ENCODE measurements at regions of chrX and their contacts with region 1.

Region 1: GRCh38 chrX:40735325-40736169 is at the start of gene MED14:
- DNase-seq: peak; percentile 93
- H3K4me3 ChIP-seq: peak within 1 kb of the TSS; percentile 51 to 88 (median 58)
- H3K27ac ChIP-seq: peak within 1 kb of the TSS; percentile 87
- H3K4me1 ChIP-seq: peaks cover 3% of the 10 kb centered on the region
- H3K27me3 ChIP-seq: no peaks in the 10 kb centered on the region
- CTCF ChIP-seq: peak; percentile 28 to 75
- total RNA-seq, gene MED14: 25.7 to 58.7 TPM

Region 2: GRCh38 chrX:40552768-40553167 is 182.8 kb before region 1 on chrX:
- CTCF ChIA-PET with region 1: no interaction called
- dilution Hi-C with region 1: no loop called
- in situ Hi-C with region 1: no loop called
- intact Hi-C with region 1: no loop called
- DNase-seq: no peak
- H3K4me3 ChIP-seq: no peak overlapping the region
- H3K27ac ChIP-seq: no peak overlapping the region
- H3K4me1 ChIP-seq: no peaks in the 10 kb centered on the region
- H3K27me3 ChIP-seq: peaks cover 2% of the 10 kb centered on the region
- CTCF ChIP-seq: peak in 1 of 2 donors; percentile 11

Region 3: GRCh38 chrX:40647307-40648197 is 88.0 kb before region 1 on chrX and contains the start of gene CXorf38:
- CTCF ChIA-PET with region 1: no interaction called
- dilution Hi-C with region 1: no loop called
- in situ Hi-C with region 1: no loop called
- intact Hi-C with region 1: loop called (anchors 5 kb)
- DNase-seq: peak; percentile 88
- H3K4me3 ChIP-seq: peak within 1 kb of the TSS; percentile 52 to 89 (median 77)
- H3K27ac ChIP-seq: peak within 1 kb of the TSS; percentile 62
- H3K4me1 ChIP-seq: peaks cover 17% of the 10 kb centered on the region
- H3K27me3 ChIP-seq: no peaks in the 10 kb centered on the region
- CTCF ChIP-seq: no peak
- total RNA-seq, gene CXorf38: 18.0 to 19.8 TPM

Region 4: GRCh38 chrX:40778861-40779575 is 43.5 kb after region 1 on chrX:
- CTCF ChIA-PET with region 1: no interaction called
- dilution Hi-C with region 1: no loop called
- in situ Hi-C with region 1: no loop called
- intact Hi-C with region 1: loop called (anchors 2 kb)
- DNase-seq: peak; percentile 69
- H3K4me3 ChIP-seq: no peak overlapping the region
- H3K27ac ChIP-seq: no peak overlapping the region
- H3K4me1 ChIP-seq: peaks cover 13% of the 10 kb centered on the region
- H3K27me3 ChIP-seq: no peaks in the 10 kb centered on the region
- CTCF ChIP-seq: no peak